OCI-LY7 (cell line): ENCODE measurements at regions of chr3 and their contacts with region 1.

Region 1: DNA sequence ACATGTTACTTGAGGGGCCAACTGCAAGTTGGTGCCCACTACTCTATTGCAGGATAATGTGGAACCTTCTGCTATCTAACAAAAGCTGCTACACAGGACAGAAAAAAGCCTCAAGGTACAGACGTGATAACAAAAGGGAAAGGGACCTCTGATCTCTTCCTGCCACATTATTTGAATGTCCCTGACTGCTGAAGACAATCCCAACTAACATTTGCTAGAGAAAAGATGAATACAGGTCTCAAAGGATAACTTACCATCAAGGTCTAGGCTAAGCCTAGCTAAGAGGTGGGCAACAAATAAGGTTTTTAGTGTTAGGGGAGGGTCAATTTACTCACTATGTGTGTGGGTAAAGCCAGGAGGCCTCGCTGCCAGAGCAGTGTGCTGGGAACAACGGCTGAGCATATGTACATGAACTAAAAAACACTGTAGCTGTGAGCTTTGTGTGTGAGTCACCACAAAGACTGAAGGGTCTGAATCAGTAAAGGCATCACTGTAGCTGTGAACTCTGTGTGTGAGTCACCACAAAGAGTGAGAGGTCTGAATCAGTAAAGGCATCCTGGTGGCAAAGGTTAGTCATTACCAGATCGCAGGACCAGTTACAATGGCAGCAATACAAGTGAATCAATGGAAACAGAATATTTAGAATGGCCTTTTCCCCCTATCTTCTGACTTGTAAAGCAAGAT is 111.7 kb downstream of the LMLN start:
- DNase-seq: no peak
- H3K4me3 ChIP-seq: no peak overlapping the region
- H3K27ac ChIP-seq: no peak overlapping the region
- H3K4me1 ChIP-seq: peaks cover 5% of the 10 kb centered on the region
- CTCF ChIP-seq: no peak

Region 2: DNA sequence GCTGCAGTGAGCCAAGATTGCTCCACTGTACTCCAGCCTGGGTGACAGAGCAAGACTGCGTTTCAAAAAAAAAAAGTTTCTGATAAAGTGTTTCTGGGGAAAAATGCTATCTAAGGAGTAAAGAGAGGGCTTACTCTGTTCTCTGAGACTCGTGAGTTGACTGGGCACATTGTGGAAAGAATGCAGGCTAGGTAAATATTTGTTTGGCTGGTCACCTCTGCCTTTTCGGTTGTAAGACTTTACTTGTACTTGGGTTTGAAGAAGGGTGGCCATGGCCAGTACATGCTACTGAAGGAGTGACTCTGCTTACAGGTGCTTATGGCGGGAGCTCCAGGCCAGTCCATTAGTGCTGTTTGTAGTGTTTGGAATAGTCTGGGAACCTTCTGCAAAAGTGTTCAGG is 403.8 kb before region 1 on chr3:
- CTCF ChIA-PET with region 1: no interaction called
- POLR2A ChIA-PET with region 1: no interaction called
- intact Hi-C with region 1: no loop called
- DNase-seq: no peak
- H3K4me3 ChIP-seq: no peak overlapping the region
- H3K27ac ChIP-seq: no peak overlapping the region
- H3K4me1 ChIP-seq: peaks cover 8% of the 10 kb centered on the region
- CTCF ChIP-seq: no peak

Region 3: GRCh38 chr3:197906023-197906849 is 165.5 kb before region 1 on chr3:
- CTCF ChIA-PET with region 1: no interaction called
- POLR2A ChIA-PET with region 1: no interaction called
- intact Hi-C with region 1: loop called (anchors 10 kb)
- DNase-seq: peak; percentile 62
- H3K4me3 ChIP-seq: no peak overlapping the region
- H3K27ac ChIP-seq: no peak overlapping the region
- H3K4me1 ChIP-seq: no peaks in the 10 kb centered on the region
- CTCF ChIP-seq: peak; percentile 90

Region 4: DNA sequence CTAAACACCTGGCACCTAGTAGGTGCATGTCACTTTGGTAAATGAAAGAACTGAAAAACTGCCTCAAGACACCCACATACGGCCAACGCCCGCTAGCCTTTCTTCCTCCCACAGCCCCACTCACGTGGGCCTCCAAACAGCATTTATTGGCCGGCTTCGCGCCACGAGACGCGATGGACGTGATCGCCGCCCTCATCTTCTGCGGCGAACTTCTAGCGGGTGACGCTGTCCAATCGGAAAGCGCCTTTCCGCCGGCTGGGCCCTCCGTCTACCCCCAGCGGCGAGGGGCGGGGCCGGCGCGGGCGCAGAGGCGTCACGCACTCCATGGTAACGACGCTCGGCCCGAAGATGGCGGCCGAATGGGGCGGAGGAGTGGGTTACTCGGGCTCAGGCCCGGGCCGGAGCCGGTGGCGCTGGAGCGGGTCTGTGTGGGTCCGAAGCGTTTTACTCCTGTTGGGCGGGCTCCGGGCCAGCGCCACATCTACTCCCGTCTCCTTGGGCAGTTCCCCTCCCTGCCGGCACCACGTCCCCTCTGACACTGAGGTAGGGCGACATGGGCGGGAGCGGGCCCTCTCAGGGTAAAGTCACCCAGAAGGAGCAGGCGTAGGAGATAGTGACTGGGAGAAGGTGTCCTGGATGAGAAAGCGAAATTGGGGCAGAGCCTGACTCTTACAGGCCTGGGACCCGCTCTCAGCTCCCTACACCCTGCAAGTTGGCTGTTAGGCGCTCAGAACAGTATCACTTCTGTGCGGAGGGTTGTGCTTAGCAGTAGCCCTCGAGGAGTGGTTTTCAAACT is 111.6 kb before region 1 on chr3 and contains the start of gene LMLN:
- CTCF ChIA-PET with region 1: no interaction called
- POLR2A ChIA-PET with region 1: no interaction called
- intact Hi-C with region 1: loop called (anchors 5 kb)
- DNase-seq: peak; percentile 96
- H3K4me3 ChIP-seq: peak within 1 kb of the TSS; percentile 81
- H3K27ac ChIP-seq: peak within 1 kb of the TSS; percentile 36
- H3K4me1 ChIP-seq: peaks cover 29% of the 10 kb centered on the region
- CTCF ChIP-seq: no peak
- total RNA-seq, gene LMLN: 0.50 and 3.7 TPM in 2 replicates

Region 5: DNA sequence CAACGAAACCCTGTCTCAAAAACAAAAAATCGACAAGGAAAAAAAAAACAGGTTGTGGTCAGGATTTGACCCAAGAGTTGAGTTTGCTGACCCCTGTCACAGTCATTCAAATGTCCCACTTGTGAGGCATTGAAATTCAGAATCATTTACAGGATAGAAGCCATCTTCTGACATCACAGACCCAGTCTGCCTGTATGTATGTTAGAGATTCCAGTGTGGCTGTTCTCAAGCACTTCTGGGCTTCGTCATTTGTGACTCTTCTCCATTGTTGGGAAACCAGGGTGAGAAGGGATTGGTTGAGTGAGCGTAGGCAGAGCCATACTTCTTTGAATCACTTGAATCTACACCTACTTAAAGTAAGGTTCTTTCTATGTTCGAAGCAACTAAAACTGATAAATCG is 54.6 kb before region 1 on chr3:
- CTCF ChIA-PET with region 1: no interaction called
- POLR2A ChIA-PET with region 1: interaction called, 10 read pairs
- intact Hi-C with region 1: no loop called
- DNase-seq: no peak
- H3K4me3 ChIP-seq: no peak overlapping the region
- H3K27ac ChIP-seq: no peak overlapping the region
- H3K4me1 ChIP-seq: no peaks in the 10 kb centered on the region
- CTCF ChIP-seq: no peak